Head of caudate nucleus (tissue), 42 donors: ENCODE measurements at regions of chr17 and their contacts with region 1.

Region 1: DNA sequence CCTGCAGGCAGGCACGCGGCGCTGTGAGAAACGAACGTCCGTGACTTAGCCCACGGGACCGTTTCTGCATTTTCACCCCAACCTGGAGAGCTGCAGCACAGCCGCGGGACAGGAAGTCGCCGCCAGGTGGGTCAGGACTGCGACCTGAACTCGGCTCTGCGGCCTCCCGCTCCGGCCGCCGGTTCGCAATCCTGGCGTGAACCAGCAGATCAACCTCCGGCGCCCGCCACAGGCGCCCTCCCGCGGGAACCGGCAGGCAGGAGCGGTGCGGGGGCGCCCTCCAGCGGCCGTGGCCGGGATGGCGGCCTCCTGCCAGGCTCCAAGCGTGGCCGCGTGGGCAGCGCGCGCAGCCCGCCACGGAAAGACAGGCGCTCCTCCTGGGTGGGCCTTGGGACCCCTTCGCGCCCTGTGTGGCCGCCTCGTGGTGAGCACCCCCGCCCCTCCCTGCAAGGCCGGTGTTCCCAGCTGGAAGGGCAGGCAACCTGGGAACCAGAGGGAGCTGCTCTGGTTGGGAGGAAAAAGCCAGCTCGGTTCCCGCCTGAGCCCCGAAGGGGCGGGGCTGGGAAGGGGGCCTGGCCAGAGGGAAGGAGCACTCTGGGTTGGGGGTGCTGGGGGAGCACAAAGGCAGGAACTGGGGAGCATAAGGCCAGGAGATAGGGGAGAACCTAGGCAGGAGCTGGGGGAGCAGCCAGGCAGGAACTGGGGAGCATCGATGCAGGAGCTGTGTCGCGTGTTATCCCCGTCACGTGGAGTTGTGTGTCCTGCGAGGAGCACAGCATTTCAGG is 28.2 kb downstream of the ACTG1 start:
- DNase-seq: peak; percentile 69 to 96 (median 91)

Region 2: DNA sequence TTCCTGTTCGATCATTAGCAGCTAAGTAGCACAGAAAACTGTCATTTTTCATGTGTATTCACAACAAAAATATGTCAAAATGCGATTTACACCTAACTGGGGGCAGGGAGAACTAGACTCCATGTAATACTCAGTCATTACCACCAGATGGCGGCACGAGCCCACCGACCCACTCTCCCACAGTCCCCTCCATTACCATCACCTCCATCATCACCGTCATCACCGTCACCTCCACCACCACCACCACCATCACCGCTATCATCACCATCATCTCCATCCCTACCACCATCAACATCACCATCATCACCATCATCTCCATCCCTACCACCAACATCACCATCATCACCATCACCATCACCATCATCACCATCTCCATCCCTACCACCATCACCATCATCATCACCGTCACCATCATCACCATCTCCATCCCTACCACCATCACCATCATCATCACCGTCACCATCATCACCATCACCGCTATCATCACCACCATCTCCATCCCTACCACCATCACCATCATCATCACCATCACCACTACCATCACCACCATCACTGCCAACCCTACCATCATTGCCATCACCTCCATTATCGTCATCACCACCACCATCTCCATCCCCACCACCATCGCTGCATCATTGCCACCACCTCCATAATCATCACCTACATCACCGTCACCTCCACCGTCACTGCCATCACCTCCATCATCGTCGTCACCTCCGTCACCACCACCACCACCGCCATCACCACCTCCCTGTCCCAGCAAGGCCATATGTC is 230.8 kb before region 1 on chr17:
- intact Hi-C with region 1: loop called (anchors 5 kb)
- DNase-seq: peak in 38 of 42 donors; percentile 39 to 88 (median 64)

Region 3: DNA sequence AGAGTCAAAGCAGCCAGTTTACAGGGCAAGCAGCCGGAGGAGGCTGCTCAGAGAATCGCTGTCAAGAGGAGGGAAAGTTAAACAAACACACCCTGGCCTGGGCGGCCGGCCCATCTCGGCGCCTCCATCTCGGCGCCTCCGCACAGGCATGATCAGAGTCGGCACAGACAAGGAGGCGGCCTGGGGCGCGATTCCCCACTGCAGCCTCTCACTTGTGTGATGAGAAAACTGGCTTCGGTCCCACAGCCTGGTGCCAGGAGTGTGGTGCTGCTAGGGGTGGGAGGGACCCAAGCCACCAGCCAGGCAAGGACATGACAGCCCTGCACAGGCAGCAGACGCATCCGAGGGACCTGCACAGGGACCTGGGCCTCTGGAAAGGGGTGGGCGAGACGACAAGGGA is 207.0 kb before region 1 on chr17:
- intact Hi-C with region 1: no loop called
- DNase-seq: peak in 31 of 42 donors; percentile 23 to 73 (median 47)

Region 4: GRCh38 chr17:81294856-81295680 is 189.3 kb before region 1 on chr17 and contains the start of gene SLC38A10:
- intact Hi-C with region 1: loop called (anchors 5 kb)
- DNase-seq: peak; percentile 82 to 97 (median 94)

Region 5: GRCh38 chr17:81401723-81402529 is 82.5 kb before region 1 on chr17:
- intact Hi-C with region 1: loop called (anchors 5 kb)
- DNase-seq: peak in 26 of 42 donors; percentile 42 to 87 (median 68)

Region 6: GRCh38 chr17:81821603-81822311 is 337.4 kb after region 1 on chr17:
- intact Hi-C with region 1: no loop called
- DNase-seq: peak in 27 of 42 donors; percentile 3 to 61 (median 31)